Activated T-helper 1 cell treated with anti-CD3 and anti-CD28 coated beads, Interleukin-12 subunit alpha, Interleukin-12 subunit beta, Interleukin-2, Interleukin-4 antibody, amounts not matched to agents 30 ng/mL and 10 ng/mL and 1 ng/mL, durations not matched to agents 14 hours and 24 hours and 36 hours (primary cell): ENCODE measurements at regions of chr17 and their contacts with region 1.

Region 1: GRCh38 chr17:61635913-61636432 is 45.0 kb upstream of the NACA2 start:
- DNase-seq: peak; percentile 35
- H3K4me3 Mint-ChIP-seq: no peak overlapping the region
- H3K27ac Mint-ChIP-seq: no peak overlapping the region
- H3K4me1 Mint-ChIP-seq: no peaks in the 10 kb centered on the region
- H3K27me3 Mint-ChIP-seq: peaks cover 56% of the 10 kb centered on the region

Region 2: GRCh38 chr17:61412143-61412859 is 223.7 kb before region 1 on chr17:
- intact Hi-C with region 1: loop called (anchors 10 kb)
- DNase-seq: peak; percentile 69
- H3K4me3 Mint-ChIP-seq: no peak overlapping the region
- H3K27ac Mint-ChIP-seq: no peak overlapping the region
- H3K4me1 Mint-ChIP-seq: peaks cover 7% of the 10 kb centered on the region
- H3K27me3 Mint-ChIP-seq: peaks cover 51% of the 10 kb centered on the region

Region 3: DNA sequence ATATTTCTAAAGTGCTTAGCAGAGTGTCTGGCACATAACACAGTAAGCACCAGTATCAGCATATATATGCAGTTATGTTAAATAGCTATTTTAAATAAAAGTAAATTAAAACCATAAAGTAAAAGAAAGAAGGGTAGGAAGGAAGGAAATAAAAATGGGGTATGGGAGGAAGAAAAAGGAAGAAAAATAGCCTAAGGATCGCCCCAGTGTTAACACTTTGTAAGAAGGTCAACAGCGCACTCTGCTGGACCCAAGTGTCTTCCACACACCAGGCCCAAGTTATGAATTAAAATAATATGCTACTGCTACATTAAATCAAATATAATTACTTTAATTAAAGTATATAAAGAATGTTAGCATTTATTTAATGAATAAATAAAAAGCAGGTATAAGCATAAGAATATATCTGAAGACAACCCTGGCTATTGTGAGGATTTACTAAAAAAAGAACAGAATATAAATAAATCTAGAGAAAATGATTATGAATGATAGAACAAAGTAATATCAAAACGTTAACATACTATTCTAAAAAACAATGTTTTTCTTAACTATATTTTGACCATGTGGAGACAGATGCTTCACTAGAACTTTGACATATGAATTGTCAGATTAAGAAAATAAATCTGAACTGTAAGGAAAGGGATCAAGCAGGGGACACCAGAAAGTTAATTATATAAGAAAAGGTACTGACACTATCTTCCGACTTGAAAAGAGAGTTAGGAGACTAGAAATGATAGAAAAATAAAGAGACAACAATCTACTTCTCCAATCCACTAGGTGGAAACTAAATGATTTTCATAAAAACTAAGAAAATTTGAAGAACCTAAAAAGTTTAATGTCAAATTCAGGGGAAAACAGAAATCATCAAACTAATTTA is 201.4 kb after region 1 on chr17:
- intact Hi-C with region 1: loop called (anchors 1 kb)
- DNase-seq: no peak
- H3K4me3 Mint-ChIP-seq: no peak overlapping the region
- H3K27ac Mint-ChIP-seq: no peak overlapping the region
- H3K4me1 Mint-ChIP-seq: no peaks in the 10 kb centered on the region
- H3K27me3 Mint-ChIP-seq: no peaks in the 10 kb centered on the region

Region 4: DNA sequence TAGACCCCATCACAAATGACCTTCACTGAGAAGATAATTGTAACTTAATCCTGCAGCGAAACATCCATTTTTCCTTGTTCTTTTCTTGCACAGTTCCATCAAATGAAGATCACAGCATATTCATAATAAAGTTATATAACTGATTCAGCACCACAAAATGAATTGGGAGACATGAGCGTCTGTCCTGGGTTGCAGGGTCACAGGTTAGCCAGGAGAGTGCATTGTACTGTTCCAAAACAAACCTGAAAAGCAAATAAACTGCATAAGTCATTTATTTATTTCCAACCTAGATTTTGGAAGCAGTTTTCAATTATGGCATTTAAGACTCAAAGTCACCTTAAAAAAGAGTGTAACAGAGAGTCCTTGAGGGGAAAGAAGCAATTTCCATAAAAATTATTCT is 310.4 kb after region 1 on chr17:
- intact Hi-C with region 1: loop called (anchors 10 kb)
- DNase-seq: no peak
- H3K4me3 Mint-ChIP-seq: no peak overlapping the region
- H3K27ac Mint-ChIP-seq: no peak overlapping the region
- H3K4me1 Mint-ChIP-seq: no peaks in the 10 kb centered on the region
- H3K27me3 Mint-ChIP-seq: no peaks in the 10 kb centered on the region

Region 5: GRCh38 chr17:62109378-62109902 is 473.5 kb after region 1 on chr17:
- intact Hi-C with region 1: loop called (anchors 1 kb)
- DNase-seq: peak; percentile 39
- H3K4me3 Mint-ChIP-seq: no peak overlapping the region
- H3K27ac Mint-ChIP-seq: no peak overlapping the region
- H3K4me1 Mint-ChIP-seq: no peaks in the 10 kb centered on the region
- H3K27me3 Mint-ChIP-seq: peaks cover 4% of the 10 kb centered on the region